ENCODE measurements at regions of chr17 and their contacts with region 1.

Region 1: DNA sequence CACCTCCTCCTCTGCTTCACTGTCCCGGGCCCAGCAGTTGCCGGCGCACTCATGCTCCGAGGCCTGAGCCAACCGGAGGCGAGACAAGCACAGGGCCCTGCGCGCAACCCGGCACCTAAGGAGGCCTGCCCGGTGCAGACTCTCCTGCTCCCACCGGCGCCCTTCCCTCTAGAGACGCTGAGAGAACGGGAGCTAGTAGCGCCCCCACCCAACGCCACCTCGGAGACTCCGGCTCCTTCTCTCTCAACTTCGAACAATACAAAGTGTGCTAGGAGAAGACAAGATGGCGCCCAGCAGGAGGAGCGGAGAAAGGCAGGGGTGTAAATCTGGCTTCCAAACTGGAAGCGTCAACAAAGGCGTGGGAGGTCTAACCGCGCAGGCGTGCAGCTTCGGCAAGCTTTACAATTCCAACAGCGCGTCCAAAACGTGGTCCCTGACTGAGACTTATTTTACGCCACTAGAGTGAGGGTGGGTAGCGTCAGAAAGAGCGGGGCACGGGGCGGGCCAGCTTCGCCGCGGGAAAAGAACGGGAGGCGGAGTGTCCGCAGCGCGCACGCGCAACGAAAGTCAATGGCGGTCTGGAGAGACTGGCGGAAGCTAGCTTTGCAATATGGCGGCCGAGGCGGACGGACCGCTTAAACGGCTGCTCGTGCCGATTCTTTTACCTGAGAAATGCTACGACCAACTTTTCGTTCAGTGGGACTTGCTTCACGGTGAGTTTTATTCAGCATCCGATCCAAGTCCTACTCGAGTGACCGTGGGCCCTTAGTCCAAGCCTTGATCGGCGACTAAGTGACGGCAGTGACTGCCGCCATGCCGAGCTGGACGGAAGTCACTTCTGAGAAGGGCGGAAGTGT is at the start of gene MPDU1:
- DNase-seq: peak; percentile 70 to 96 (median 78)
- ATAC-seq: peak; percentile 55
- H3K4me3 ChIP-seq: peak within 1 kb of the TSS; percentile 47
- H3K27ac ChIP-seq: peak within 1 kb of the TSS; percentile 99
- H3K4me1 ChIP-seq: peaks cover 65 to 80% of the 10 kb centered on the region in 2 experiments
- H3K27me3 ChIP-seq: no peaks in the 10 kb centered on the region
- CTCF ChIP-seq: no peak
- EP300 ChIP-seq: peak; percentile 55; the same call in 1 of the 2 replicates
- POLR2A ChIP-seq: peak; percentile 93
- RAD21 ChIP-seq: no peak
- polyA plus RNA-seq, gene MPDU1: 4.9 to 21.8 TPM

Region 2: GRCh38 chr17:7572588-7573323 is 10.7 kb before region 1 on chr17:
- CTCF ChIA-PET with region 1: no interaction called
- POLR2A ChIA-PET with region 1: interaction called, 46 read pairs
- in situ Hi-C with region 1: no loop called
- intact Hi-C with region 1: no loop called
- DNase-seq: peak; percentile 89 to 98 (median 93)
- ATAC-seq: peak; percentile 94
- H3K4me3 ChIP-seq: peak overlapping the region; percentile 99
- H3K27ac ChIP-seq: peak overlapping the region; percentile 98
- H3K4me1 ChIP-seq: peaks cover 8 to 23% of the 10 kb centered on the region in 2 experiments; a peak in 4 of 5 replicates
- H3K27me3 ChIP-seq: no peaks in the 10 kb centered on the region
- CTCF ChIP-seq: no peak
- EP300 ChIP-seq: no peak
- POLR2A ChIP-seq: peak; percentile 99
- RAD21 ChIP-seq: no peak

Region 3: DNA sequence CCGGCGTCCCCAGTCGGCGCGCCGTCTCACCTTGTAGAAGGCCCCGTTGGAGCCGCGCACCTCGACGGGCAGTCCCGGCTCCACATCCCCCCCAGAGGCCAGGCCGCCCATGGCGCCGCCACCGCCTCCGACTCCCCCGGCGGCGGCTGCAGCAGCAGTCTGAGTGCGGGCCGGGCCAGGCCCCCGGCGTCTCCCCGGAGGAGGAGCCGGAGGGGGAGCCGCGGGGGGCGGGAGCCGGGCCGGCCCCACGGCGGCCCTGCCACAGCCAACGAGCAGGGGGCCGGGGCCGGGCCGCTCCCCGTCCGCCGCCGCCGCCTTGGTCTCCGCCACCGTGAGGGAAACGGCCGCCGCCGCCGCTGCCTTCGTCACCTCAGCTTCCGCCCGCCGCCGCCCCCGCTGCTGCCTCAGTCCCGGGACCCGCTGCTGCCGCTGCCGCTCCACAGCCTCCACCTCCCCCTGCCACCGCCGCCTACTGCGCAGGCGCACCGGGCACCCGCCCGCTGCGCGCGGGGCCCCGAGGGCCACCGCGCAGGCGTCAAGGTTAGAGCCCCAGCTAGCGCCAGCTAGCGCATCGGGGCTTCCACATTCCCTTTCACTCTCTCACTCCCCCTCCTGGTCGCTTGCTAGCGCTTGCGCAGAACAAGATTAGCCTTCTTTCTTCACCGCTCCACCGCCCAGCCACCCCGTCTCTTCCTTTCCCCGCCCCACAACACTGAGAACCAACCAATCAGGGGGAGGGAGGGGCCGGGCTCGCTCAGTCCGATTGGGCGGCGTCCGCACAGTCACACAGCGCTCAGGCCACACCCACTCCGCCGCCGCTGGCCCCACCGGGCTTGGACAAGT is 31.2 kb after region 1 on chr17 and contains the start of gene FXR2:
- CTCF ChIA-PET with region 1: no interaction called
- POLR2A ChIA-PET with region 1: interaction called, 5 read pairs
- in situ Hi-C with region 1: no loop called
- intact Hi-C with region 1: loop called (anchors 5 kb)
- DNase-seq: peak; percentile 95 to 99 (median 96)
- ATAC-seq: peak; percentile 98
- H3K4me3 ChIP-seq: peak within 1 kb of the TSS; percentile 81
- H3K27ac ChIP-seq: peak within 1 kb of the TSS; percentile 80
- H3K4me1 ChIP-seq: peaks cover 16 to 27% of the 10 kb centered on the region in 2 experiments; a peak in 4 of 5 replicates
- H3K27me3 ChIP-seq: no peaks in the 10 kb centered on the region
- CTCF ChIP-seq: peak; percentile 75 to 98 (median 98)
- EP300 ChIP-seq: no peak
- POLR2A ChIP-seq: no peak
- RAD21 ChIP-seq: peak; percentile 28 to 33; a peak in 3 of 4 replicates
- polyA plus RNA-seq, gene FXR2: 2.0 to 2.2 TPM

Measured in K562 (cell line).